Calu3 (cell line): ENCODE measurements at regions of chr2 and their contacts with region 1.

Region 1: DNA sequence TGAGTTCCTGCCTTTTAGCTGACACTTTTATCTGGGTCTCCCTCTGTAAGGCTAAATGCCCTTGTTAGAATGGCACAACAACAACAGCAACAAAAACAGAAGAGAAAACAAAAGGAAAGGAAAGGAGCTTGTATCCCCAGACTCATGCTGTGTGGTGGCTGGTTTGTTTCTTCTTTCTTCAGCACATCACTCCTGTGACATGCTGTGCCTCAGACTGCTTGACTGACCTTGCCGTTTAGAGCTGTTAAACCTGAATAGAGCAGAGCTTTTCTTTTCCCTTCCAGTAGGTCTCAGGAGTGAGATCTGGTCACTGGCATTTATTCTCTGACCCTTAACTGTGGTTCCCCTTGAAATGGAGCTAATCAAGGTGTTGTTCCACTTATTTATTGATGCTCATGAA is 18.9 kb downstream of the GALNT13 start:
- DNase-seq: no peak
- H3K4me3 Mint-ChIP-seq: no peak overlapping the region
- H3K27ac Mint-ChIP-seq: no peak overlapping the region
- H3K4me1 Mint-ChIP-seq: no peaks in the 10 kb centered on the region
- H3K27me3 Mint-ChIP-seq: no peaks in the 10 kb centered on the region
- CTCF ChIP-seq: no peak

Region 2: GRCh38 chr2:152875701-152876695 is 1014.6 kb before region 1 on chr2:
- CTCF ChIA-PET with region 1: no interaction called
- intact Hi-C with region 1: no loop called
- DNase-seq: no peak
- H3K4me3 Mint-ChIP-seq: no peak overlapping the region
- H3K27ac Mint-ChIP-seq: no peak overlapping the region
- H3K4me1 Mint-ChIP-seq: no peaks in the 10 kb centered on the region
- H3K27me3 Mint-ChIP-seq: peaks cover 37% of the 10 kb centered on the region
- CTCF ChIP-seq: no peak

Region 3: DNA sequence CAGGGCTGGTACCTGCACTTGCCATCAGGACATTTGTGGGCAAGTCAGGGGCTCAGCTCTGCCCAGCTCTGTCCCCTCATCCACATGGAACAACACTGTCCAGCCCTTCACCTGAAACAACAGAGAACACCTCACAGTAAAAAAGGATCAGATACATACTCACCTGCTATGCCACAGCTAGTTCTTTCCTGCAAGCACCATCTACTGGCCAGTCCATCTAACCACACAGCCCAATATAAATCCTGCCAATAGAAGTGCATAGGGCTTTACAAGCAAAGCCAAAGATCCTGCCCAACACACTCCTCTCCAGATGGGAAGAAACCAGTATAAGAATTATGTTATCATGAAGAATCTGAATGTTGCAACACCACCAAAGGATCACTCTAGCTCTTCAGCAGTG is 71.1 kb before region 1 on chr2:
- CTCF ChIA-PET with region 1: no interaction called
- intact Hi-C with region 1: no loop called
- DNase-seq: no peak
- H3K4me3 Mint-ChIP-seq: no peak overlapping the region
- H3K27ac Mint-ChIP-seq: no peak overlapping the region
- H3K4me1 Mint-ChIP-seq: no peaks in the 10 kb centered on the region
- H3K27me3 Mint-ChIP-seq: no peaks in the 10 kb centered on the region
- CTCF ChIP-seq: no peak

Region 4: GRCh38 chr2:153967248-153967973 is 76.8 kb after region 1 on chr2:
- CTCF ChIA-PET with region 1: no interaction called
- intact Hi-C with region 1: no loop called
- DNase-seq: no peak
- H3K4me3 Mint-ChIP-seq: no peak overlapping the region
- H3K27ac Mint-ChIP-seq: no peak overlapping the region
- H3K4me1 Mint-ChIP-seq: peaks cover 18% of the 10 kb centered on the region
- H3K27me3 Mint-ChIP-seq: no peaks in the 10 kb centered on the region
- CTCF ChIP-seq: no peak

Region 5: GRCh38 chr2:154142480-154142879 is 251.9 kb after region 1 on chr2:
- CTCF ChIA-PET with region 1: no interaction called
- intact Hi-C with region 1: no loop called
- DNase-seq: no peak
- H3K4me3 Mint-ChIP-seq: no peak overlapping the region
- H3K27ac Mint-ChIP-seq: no peak overlapping the region
- H3K4me1 Mint-ChIP-seq: no peaks in the 10 kb centered on the region
- H3K27me3 Mint-ChIP-seq: no peaks in the 10 kb centered on the region
- CTCF ChIP-seq: no peak

Region 6: GRCh38 chr2:154306266-154306970 is 415.8 kb after region 1 on chr2:
- CTCF ChIA-PET with region 1: no interaction called
- intact Hi-C with region 1: loop called (anchors 5 kb)
- DNase-seq: no peak
- H3K4me3 Mint-ChIP-seq: no peak overlapping the region
- H3K27ac Mint-ChIP-seq: no peak overlapping the region
- H3K4me1 Mint-ChIP-seq: no peaks in the 10 kb centered on the region
- H3K27me3 Mint-ChIP-seq: no peaks in the 10 kb centered on the region
- CTCF ChIP-seq: no peak